ENCODE measurements at regions of chr5 and their contacts with region 1.

Region 1: GRCh38 chr5:170791325-170791954 is 7.9 kb downstream of the GABRP start:
- DNase-seq: peak; percentile 83 to 85 (median 84)
- ATAC-seq: peak; percentile 89
- H3K4me3 ChIP-seq: no peak overlapping the region
- H3K27ac ChIP-seq: no peak overlapping the region
- H3K4me1 ChIP-seq: no peaks in the 10 kb centered on the region
- H3K27me3 ChIP-seq: no peaks in the 10 kb centered on the region
- CTCF ChIP-seq: peak; percentile 37 to 91 (median 81)
- POLR2A ChIP-seq: no peak

Region 2: DNA sequence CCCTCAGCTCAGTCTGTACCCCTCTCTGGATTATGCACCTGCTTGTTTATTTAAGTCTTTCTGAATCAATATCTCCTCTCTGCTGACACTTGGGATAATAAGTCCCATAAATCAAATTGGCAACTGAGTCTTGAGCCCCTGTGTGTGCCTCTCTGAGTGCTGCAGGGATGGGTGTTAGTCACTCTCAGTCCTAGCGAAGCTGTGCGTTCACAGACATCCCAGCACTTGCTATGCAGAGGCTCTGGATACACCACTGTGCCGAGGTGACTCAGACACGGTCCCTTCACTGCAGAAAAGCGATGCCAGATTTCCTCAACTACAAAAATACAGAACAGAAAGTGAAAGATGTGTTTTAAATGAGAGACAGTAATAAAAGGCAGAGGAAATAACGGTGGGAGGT is 398.2 kb before region 1 on chr5:
- intact Hi-C with region 1: no loop called
- DNase-seq: peak in 1 of 4 donors; percentile 24
- ATAC-seq: no peak
- H3K4me3 ChIP-seq: no peak overlapping the region
- H3K27ac ChIP-seq: no peak overlapping the region
- H3K4me1 ChIP-seq: no peaks in the 10 kb centered on the region
- H3K27me3 ChIP-seq: no peaks in the 10 kb centered on the region
- CTCF ChIP-seq: no peak
- POLR2A ChIP-seq: no peak

Region 3: GRCh38 chr5:170638454-170639220 is 152.8 kb before region 1 on chr5:
- intact Hi-C with region 1: loop called (anchors 5 kb)
- DNase-seq: peak; percentile 55 to 72 (median 68)
- ATAC-seq: peak; percentile 54
- H3K4me3 ChIP-seq: no peak overlapping the region
- H3K27ac ChIP-seq: no peak overlapping the region
- H3K4me1 ChIP-seq: peaks cover 8% of the 10 kb centered on the region
- H3K27me3 ChIP-seq: no peaks in the 10 kb centered on the region
- CTCF ChIP-seq: peak; percentile 63 to 83 (median 72)
- POLR2A ChIP-seq: no peak

Region 4: DNA sequence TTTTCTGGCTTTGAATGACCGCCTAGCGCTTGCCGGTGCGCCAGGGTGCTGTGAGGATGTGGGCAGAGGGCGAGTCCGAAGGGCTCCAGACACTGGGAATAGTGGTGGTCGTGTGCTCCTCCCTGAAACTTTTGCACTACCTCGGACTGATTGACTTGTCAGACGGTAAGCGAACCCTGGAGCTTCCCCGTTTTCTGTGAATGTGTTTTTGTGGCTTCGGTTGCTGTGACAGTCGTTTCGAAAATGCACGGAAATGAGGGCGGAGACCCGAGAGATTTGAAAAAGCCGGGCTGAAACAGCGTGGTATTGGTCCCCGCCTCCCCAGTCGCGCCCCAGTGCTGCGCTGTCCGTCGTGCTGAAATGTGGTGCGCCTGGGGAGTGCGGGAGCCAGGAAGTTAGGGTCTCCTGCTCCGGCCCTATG is 110.4 kb before region 1 on chr5:
- intact Hi-C with region 1: no loop called
- DNase-seq: peak in 3 of 4 donors; percentile 5 to 18 (median 17)
- ATAC-seq: no peak
- H3K4me3 ChIP-seq: no peak overlapping the region
- H3K27ac ChIP-seq: no peak overlapping the region
- H3K4me1 ChIP-seq: no peaks in the 10 kb centered on the region
- H3K27me3 ChIP-seq: no peaks in the 10 kb centered on the region
- CTCF ChIP-seq: no peak
- POLR2A ChIP-seq: no peak

Region 5: GRCh38 chr5:170747851-170748250 is 43.6 kb before region 1 on chr5:
- intact Hi-C with region 1: loop called (anchors 5 kb)
- DNase-seq: peak in 1 of 4 donors; percentile 41
- ATAC-seq: no peak
- H3K4me3 ChIP-seq: no peak overlapping the region
- H3K27ac ChIP-seq: peak overlapping the region in 2 of 4 donors; percentile 71 to 87
- H3K4me1 ChIP-seq: peaks cover 81% of the 10 kb centered on the region
- H3K27me3 ChIP-seq: no peaks in the 10 kb centered on the region
- CTCF ChIP-seq: peak in 5 of 7 experiments; percentile 12 to 49 (median 36)
- POLR2A ChIP-seq: no peak

Measured in body of pancreas (tissue), 4 donors.